ENCODE measurements at regions of chr9 and their contacts with region 1.

Region 1: GRCh38 chr9:124040935-124041816 is 29.6 kb downstream of the LHX2 start:
- DNase-seq: peak in 4 of 5 donors; percentile 37 to 74 (median 54)
- H3K4me3 ChIP-seq: peak overlapping the region in 2 of 3 donors; percentile 50 to 55
- H3K27ac ChIP-seq: no peak overlapping the region
- H3K4me1 ChIP-seq: peaks cover 0 to 6% (median 2%) of the 10 kb centered on the region in 3 donors
- H3K27me3 ChIP-seq: peaks cover 7% of the 10 kb centered on the region
- CTCF ChIP-seq: peak; percentile 72

Region 2: DNA sequence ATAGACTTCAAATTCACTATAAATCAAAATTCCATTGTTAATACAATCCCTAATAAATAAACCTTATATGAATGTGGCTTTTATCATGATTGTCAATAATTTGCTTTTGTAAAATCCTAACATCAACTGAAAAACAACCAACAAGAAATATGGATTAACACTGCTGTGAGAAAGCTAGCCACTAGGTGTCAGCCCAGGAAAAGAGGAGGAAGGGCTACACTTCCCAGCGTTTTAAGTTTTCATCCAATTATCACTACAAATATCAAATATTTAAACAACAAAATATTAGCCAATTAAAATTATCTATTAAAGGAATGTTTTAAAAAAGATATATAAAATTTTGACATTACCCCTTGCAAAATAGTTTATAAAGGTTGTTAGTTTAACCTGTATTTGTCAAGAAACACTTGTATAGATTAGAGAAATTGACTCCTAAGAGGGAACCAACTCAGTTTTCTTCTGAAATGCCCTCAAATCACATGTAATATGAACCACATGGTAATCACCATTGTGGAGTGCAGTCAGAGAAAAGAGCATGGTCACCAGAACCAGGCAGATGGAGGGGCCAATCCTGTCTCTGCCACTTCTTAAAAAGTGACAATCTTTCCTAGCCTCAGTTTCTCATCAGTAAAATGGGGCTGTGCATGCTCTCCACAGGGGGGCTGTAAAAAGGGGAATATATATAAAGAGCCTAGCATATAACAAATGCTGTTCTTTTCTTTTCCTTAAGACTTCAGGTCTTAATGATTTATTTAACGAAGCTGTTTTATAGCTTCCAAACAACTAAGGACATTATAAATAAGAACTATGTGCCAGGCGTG is 497.0 kb before region 1 on chr9:
- intact Hi-C with region 1: loop called (anchors 10 kb)
- DNase-seq: peak in 2 of 5 donors; percentile 62
- H3K4me3 ChIP-seq: no peak overlapping the region
- H3K27ac ChIP-seq: no peak overlapping the region
- H3K4me1 ChIP-seq: peaks cover 0 to 24% (median 13%) of the 10 kb centered on the region in 3 donors
- H3K27me3 ChIP-seq: no peaks in the 10 kb centered on the region
- CTCF ChIP-seq: peak; percentile 86

Measured in kidney (tissue), 22 donors.